ENCODE measurements at regions of chr11 and their contacts with region 1.

Region 1: GRCh38 chr11:83063073-83063754 is 8.5 kb downstream of the RAB30 start:
- DNase-seq: no peak
- H3K4me3 Mint-ChIP-seq: peak overlapping the region; percentile 74
- H3K27ac Mint-ChIP-seq: peak overlapping the region; percentile 96
- H3K4me1 Mint-ChIP-seq: peaks cover 30% of the 10 kb centered on the region
- H3K27me3 Mint-ChIP-seq: no peaks in the 10 kb centered on the region

Region 2: GRCh38 chr11:82959987-82960778 is 103.0 kb before region 1 on chr11:
- CTCF ChIA-PET with region 1: no interaction called
- POLR2A ChIA-PET with region 1: interaction called, 10 read pairs
- DNase-seq: peak; percentile 47
- H3K4me3 Mint-ChIP-seq: no peak overlapping the region
- H3K27ac Mint-ChIP-seq: peak overlapping the region; percentile 24
- H3K4me1 Mint-ChIP-seq: peaks cover 62% of the 10 kb centered on the region
- H3K27me3 Mint-ChIP-seq: peaks cover 17% of the 10 kb centered on the region

Region 3: DNA sequence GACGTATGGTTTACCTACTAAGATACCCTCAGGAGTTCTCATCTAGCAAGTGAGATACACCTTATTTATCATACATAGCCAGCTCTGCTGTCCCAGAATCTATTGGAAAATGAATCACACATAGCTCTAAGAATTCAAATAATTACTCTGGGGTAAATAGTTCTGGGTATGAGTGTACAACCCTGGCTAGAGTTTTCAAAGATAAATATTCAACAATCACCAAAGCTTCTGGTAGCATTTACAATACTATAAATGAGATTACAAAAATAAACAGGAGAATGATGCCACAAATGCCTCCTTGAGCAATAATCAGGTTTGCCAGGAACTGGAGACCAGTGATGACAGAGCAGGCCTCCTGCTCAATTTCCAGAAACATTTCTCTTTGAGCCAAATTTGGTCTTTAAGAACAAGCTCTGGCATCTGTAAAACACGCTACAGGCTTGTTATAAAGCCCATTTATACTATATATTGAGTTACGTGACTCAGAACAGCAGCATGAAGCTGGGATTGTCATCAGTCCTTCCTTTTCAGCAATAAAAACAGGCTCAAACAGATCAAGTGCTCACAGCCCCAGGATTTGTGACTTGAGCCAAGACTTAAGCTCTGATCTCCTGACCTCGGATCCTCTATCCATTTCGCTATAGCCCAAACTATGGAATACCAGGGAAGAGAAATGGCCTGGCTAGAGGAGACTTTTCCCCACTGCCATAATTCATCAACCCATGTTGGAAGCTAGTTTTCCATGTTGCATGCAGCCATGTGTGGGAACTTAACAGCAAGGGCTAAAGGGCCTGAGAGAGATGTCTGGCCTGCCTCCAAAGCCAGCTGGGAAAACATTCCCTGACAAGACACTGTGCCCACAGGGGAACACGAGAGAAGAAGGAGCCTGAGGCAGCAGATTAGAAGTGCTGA is 11.2 kb before region 1 on chr11:
- CTCF ChIA-PET with region 1: interaction called, 3 read pairs
- POLR2A ChIA-PET with region 1: interaction called, 17 read pairs
- DNase-seq: no peak
- H3K4me3 Mint-ChIP-seq: no peak overlapping the region
- H3K27ac Mint-ChIP-seq: no peak overlapping the region
- H3K4me1 Mint-ChIP-seq: peaks cover 46% of the 10 kb centered on the region
- H3K27me3 Mint-ChIP-seq: no peaks in the 10 kb centered on the region

Region 4: GRCh38 chr11:83175815-83176214 is 112.6 kb after region 1 on chr11:
- CTCF ChIA-PET with region 1: no interaction called
- POLR2A ChIA-PET with region 1: no interaction called
- DNase-seq: no peak
- H3K4me3 Mint-ChIP-seq: no peak overlapping the region
- H3K27ac Mint-ChIP-seq: no peak overlapping the region
- H3K4me1 Mint-ChIP-seq: peaks cover 50% of the 10 kb centered on the region
- H3K27me3 Mint-ChIP-seq: no peaks in the 10 kb centered on the region